ENCODE measurements at regions of chr2 and their contacts with region 1.

Region 1: DNA sequence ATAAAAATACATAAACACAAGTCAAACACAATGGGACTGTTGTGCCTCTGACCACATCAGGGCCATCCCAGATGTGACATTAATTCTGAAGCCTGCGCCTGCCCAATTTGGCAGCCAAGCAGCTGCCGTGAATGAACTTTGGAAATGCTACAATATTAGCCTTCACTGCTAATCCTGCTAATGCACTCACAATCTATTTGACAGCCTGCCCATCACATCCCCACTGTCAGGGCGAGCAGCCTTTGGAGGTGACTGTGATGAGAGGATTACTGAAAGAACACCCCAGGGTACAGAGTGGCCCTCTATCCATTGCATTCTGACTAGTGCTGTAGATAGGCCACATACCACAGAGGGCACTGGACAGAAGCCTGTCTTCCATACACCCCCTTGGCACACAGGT is 21.6 kb downstream of the OSR1 start:
- DNase-seq: no peak
- H3K4me3 ChIP-seq: no peak overlapping the region
- H3K27ac ChIP-seq: no peak overlapping the region
- H3K4me1 ChIP-seq: no peaks in the 10 kb centered on the region
- H3K27me3 ChIP-seq: no peaks in the 10 kb centered on the region
- CTCF ChIP-seq: no peak

Region 2: GRCh38 chr2:19235308-19235707 is 101.5 kb before region 1 on chr2:
- CTCF ChIA-PET with region 1: no interaction called
- dilution Hi-C with region 1: no loop called
- in situ Hi-C with region 1: no loop called
- intact Hi-C with region 1: no loop called
- DNase-seq: peak; percentile 90
- H3K4me3 ChIP-seq: no peak overlapping the region
- H3K27ac ChIP-seq: peak overlapping the region; percentile 68
- H3K4me1 ChIP-seq: peaks cover 26% of the 10 kb centered on the region
- H3K27me3 ChIP-seq: no peaks in the 10 kb centered on the region
- CTCF ChIP-seq: no peak

Region 3: DNA sequence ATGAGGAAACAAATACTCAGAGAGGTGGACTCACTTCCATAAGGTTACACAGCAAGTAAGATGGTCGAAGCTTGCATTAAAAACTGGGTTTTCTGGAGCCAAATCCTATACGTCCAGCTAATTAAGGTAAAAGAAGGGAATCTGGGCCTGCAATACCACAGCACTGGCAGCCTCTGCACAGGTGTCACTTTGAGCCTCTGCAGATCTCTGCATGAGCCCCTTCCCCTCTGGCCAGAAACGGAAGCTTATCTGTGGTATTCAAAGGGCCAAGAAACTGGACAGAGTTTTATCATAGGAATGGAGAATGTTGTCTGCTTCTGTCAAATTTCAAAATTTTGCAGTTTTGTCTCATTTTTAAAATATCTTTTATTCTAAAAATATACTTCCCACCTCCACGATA is 54.5 kb before region 1 on chr2:
- CTCF ChIA-PET with region 1: no interaction called
- dilution Hi-C with region 1: loop called (anchors 5 kb)
- in situ Hi-C with region 1: no loop called
- intact Hi-C with region 1: no loop called
- DNase-seq: no peak
- H3K4me3 ChIP-seq: no peak overlapping the region
- H3K27ac ChIP-seq: no peak overlapping the region
- H3K4me1 ChIP-seq: no peaks in the 10 kb centered on the region
- H3K27me3 ChIP-seq: no peaks in the 10 kb centered on the region
- CTCF ChIP-seq: no peak

Region 4: GRCh38 chr2:19299020-19299419 is 37.8 kb before region 1 on chr2:
- CTCF ChIA-PET with region 1: no interaction called
- dilution Hi-C with region 1: no loop called
- in situ Hi-C with region 1: no loop called
- intact Hi-C with region 1: no loop called
- DNase-seq: peak; percentile 4
- H3K4me3 ChIP-seq: no peak overlapping the region
- H3K27ac ChIP-seq: no peak overlapping the region
- H3K4me1 ChIP-seq: no peaks in the 10 kb centered on the region
- H3K27me3 ChIP-seq: no peaks in the 10 kb centered on the region
- CTCF ChIP-seq: no peak

Region 5: DNA sequence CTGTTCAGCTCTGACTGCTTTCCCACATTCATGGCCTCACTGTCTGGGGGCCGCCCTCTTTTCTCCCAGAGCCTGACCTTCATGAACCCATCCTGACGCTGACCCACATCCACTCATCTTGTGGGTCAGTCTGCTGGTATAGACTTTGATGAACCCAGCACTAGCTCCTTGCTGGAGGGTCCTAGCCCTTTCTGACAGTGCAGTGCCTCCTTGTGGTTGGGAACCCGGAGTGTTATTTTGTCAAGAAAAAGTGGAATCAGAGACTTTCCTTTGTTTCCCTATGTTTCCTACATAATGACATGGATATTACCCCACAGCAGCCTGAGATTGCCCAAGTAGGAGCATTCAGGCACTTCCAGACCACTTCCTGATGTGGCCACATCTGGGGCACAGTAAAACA is 40.9 kb after region 1 on chr2:
- CTCF ChIA-PET with region 1: no interaction called
- dilution Hi-C with region 1: no loop called
- in situ Hi-C with region 1: no loop called
- intact Hi-C with region 1: no loop called
- DNase-seq: no peak
- H3K4me3 ChIP-seq: no peak overlapping the region
- H3K27ac ChIP-seq: no peak overlapping the region
- H3K4me1 ChIP-seq: no peaks in the 10 kb centered on the region
- H3K27me3 ChIP-seq: no peaks in the 10 kb centered on the region
- CTCF ChIP-seq: no peak